Left cardiac atrium (tissue), 4 donors: ENCODE measurements at regions of chr1 and their contacts with region 1.

Region 1: GRCh38 chr1:157992031-157992832 is 1.2 kb upstream of the KIRREL1 start:
- DNase-seq: peak; percentile 78
- ATAC-seq: peak; percentile 46 to 65

Region 2: DNA sequence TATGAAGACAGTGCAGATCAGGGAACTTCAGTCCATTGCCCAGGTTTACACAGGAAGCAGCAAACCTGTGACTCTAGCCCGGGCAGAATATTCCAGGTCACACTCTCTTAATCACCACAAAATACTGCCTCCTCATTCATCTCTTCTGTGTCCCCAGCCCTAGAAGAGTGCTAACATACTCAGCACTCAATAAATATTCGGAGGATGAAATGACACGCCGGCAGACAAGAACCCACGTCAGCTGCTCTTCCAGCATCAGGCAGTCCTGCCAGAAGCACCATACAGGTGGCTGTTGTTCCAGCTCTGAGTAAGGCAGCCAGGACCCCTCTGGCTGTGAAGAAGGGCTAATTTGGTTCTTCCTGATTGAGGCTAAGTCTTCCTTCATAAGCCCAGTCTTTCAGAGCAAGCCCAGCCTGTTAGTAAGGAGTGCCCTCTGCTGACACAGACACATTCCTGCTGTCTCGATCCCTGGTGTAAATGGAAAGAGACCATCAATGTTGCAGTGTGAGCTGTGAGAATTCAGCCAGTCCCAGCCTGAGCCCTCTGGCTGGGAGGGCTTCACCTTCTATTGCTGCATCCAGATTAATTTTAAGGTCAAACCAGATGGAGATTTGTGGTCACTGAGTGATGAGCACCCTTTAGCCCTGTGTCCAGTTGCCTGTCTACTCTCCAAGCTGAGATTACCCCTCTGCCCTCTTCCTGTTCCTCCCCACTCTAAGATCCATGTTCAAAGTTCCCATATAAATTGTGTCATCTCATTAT is 43.7 kb before region 1 on chr1:
- intact Hi-C with region 1: no loop called
- DNase-seq: no peak
- ATAC-seq: peak; percentile 70 to 76

Region 3: DNA sequence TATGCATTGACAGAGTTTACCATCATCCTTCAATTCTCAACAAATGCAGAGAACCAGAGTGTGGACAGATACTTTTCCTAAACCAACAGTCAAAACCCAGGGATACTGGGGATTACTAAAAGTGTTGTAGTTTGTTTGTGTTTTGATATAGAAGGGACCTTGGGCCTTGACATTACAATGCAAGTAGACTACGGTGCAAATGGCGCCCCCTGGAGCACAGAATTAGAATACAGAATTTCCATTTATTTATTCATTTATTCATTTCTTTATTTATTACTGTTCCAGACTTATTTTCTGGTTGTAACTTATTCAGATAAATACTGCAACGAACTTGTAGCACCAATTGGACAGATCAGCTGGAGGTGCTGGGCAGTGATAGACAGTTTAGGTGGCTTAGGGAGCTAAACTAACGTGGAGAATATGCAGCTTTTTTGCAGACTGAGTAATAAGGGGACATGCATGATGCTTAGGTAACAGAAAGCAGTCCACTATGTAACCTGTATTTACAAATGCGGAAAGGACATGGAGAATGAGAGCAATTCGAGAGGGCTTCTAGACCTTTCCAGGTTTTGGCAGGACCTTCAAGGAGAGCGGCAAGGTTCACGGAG is 43.8 kb after region 1 on chr1:
- intact Hi-C with region 1: loop called (anchors 5 kb)
- DNase-seq: peak; percentile 54
- ATAC-seq: peak; percentile 28 to 52

Region 4: DNA sequence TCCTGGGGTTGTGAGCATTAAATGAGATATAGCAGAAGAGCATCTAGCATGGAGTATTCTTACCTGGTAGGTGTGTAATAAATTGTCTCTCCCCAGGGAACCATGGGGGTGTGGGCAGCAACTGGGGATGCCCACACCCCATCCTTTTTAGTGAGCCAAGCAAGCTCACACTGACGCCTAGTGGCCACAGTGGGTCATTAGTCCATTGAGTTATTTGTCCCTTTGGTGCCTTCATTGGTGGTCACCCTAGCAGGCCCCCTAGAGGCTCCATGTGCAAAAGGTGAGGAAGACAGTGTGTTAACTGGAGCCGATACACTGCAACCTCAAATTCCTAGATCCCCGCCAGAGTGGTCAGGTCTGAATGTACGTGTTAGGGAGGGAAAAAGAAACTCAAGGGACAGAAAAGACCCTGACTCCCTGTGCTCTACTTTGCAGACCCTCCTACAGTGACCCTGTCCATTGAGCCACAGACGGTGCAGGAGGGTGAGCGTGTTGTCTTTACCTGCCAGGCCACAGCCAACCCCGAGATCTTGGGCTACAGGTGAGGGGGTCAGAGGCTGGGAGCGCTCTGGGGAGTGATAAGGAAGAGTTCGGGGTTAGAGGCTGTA is 95.2 kb after region 1 on chr1:
- intact Hi-C with region 1: loop called (anchors 2 to 5 kb)
- DNase-seq: peak; percentile 64
- ATAC-seq: peak; percentile 35 to 65

Region 5: DNA sequence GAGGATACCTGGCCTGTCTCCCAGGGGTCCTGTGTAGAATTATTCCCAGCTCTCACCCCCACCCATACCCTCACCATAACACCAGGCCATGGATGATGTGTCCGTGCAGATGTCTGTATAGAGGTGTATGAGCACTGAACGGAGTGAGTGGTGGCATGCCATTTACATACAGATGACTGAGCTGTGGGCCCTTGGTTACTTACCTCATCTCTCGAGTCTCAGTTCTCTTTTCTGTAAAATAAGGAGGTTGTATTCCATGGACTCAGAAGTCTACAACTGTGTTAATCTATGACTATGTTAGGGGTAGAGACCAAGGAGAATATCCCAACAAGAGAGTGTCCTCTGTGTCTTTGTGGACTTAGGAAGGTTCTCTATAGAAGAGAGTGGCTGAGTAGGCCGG is 122.9 kb after region 1 on chr1:
- intact Hi-C with region 1: loop called in 1 of 2 experiments (anchors 2 kb)
- DNase-seq: no peak
- ATAC-seq: no peak